Calu3 (cell line): ENCODE measurements at regions of chr7 and their contacts with region 1.

Region 1: DNA sequence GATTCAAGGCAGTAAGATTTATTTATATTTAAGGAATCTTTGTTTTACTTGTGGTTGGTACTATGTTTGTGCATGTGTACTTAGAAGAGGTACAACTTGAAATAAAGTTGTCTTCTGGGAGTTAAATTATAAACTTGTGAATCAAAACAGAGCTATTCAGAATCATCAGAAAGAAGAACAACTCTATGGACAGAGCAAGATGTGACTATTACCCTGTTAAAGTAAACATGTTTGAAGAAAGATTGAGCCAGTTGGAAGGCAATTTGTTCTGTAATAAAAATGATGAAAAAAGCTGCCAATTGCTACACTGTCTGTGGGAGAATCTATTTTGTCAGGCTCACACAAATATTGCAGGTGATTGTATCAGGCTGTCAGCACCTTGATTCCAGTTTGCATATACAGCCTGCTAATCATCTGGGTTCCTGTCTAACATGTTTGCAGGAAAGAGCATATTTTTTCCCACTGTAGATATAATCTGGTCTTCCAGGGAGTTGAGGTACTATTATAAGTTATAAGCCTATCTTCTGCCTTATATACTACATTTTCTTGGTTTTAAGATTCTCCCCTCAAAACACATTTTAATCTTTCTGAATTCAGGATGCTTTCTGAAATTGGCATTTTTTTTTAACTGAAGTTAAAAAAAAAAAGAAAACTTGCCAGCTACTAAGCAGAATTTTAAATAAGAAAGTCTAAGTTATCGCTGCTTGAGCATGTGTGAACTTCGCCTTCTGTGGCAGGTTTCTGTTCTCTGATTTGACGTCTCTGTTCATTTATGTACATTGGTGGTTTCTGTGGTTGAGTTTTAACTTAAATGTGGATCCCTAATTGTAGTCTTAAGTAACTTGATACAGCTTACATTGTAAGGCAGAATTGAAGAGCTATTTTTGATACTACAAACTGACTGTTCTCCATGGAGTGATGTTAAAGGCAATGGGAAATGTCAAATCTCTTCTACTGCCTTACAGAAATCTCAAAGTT is 46.0 kb downstream of the ZNRF2 start:
- DNase-seq: no peak
- H3K4me3 Mint-ChIP-seq: peak overlapping the region; percentile 4
- H3K27ac Mint-ChIP-seq: no peak overlapping the region
- H3K4me1 Mint-ChIP-seq: peaks cover 39% of the 10 kb centered on the region
- H3K27me3 Mint-ChIP-seq: no peaks in the 10 kb centered on the region
- CTCF ChIP-seq: no peak

Region 2: GRCh38 chr7:30212701-30213111 is 117.7 kb before region 1 on chr7:
- CTCF ChIA-PET with region 1: no interaction called
- intact Hi-C with region 1: no loop called
- DNase-seq: no peak
- H3K4me3 Mint-ChIP-seq: no peak overlapping the region
- H3K27ac Mint-ChIP-seq: no peak overlapping the region
- H3K4me1 Mint-ChIP-seq: no peaks in the 10 kb centered on the region
- H3K27me3 Mint-ChIP-seq: no peaks in the 10 kb centered on the region
- CTCF ChIP-seq: no peak

Region 3: DNA sequence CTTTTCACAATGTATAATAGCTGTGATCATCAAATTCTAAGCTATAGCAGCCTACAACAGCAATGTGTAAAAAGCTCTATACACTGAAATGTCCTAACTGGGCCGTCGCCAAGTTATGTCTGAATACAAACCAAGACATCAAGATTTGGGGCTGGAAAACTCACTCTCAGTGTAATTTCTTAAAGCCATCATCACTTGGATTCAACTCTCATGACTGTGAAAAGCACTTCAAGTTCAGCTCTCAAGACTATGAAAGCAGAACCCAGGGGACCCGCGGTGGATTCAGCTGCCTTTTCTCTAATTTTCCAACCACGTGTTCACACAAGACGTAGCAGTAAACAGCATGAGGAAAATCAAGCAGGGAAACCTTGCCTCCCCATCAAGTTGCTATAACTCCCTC is 61.8 kb before region 1 on chr7:
- CTCF ChIA-PET with region 1: no interaction called
- intact Hi-C with region 1: no loop called
- DNase-seq: no peak
- H3K4me3 Mint-ChIP-seq: no peak overlapping the region
- H3K27ac Mint-ChIP-seq: no peak overlapping the region
- H3K4me1 Mint-ChIP-seq: peaks cover 2% of the 10 kb centered on the region
- H3K27me3 Mint-ChIP-seq: no peaks in the 10 kb centered on the region
- CTCF ChIP-seq: no peak

Region 4: DNA sequence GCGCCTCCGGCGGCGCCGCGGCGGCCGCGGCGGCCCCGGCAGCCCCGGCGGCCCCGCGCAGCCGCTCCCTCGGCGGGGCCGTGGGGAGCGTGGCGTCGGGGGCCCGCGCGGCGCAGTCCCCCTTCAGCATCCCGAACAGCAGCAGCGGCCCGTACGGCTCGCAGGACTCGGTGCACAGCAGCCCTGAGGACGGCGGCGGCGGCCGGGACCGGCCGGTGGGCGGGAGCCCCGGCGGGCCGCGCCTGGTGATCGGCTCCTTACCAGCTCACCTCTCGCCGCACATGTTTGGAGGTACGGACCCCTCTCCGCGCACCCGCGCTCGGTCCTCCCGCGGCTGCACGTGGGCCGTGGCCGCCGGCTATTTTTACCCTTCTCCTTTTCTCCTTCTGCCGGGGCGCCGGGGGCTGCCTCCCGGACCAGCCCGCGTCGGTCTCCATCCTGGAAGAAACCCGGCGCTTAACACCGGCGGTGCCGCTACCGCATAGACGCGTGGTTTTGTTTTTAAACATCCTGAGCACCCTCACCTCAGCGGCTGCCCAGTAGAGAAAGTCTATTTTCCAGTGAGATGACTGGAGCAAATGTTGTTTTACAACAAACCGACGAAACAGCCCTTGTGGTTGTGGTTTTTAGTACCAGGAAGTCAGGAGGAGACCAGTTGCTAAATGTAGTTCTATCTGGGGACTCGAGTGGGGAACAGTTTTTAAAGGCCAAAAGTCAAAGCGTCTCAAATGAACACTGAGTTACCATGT is 44.7 kb before region 1 on chr7:
- CTCF ChIA-PET with region 1: no interaction called
- intact Hi-C with region 1: loop called (anchors 5 kb)
- DNase-seq: peak; percentile 46
- H3K4me3 Mint-ChIP-seq: peak overlapping the region; percentile 86
- H3K27ac Mint-ChIP-seq: peak overlapping the region; percentile 82
- H3K4me1 Mint-ChIP-seq: peaks cover 37% of the 10 kb centered on the region
- H3K27me3 Mint-ChIP-seq: no peaks in the 10 kb centered on the region
- CTCF ChIP-seq: no peak

Region 5: DNA sequence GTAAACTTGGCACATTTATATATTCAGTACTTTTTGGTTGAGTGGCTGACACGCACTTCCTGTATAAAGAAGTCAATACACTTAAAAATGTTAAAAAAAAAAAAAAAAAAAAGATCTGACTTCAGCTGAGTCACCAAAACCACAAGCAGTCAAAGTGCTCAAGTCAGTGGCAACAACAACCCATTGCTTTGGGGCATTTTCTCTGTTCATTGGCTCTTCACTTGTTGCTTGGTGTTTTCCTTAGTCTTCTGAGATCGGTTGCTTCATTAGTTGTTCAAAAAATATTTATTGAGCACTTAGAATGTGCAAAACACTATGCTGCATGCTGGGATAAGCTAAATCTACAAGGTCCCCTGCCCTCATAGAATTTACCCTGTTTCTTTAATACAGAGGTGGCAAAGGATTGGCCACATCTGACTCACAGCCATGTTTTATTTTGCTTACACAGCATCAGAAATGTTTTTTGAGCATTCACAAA is 17.7 kb after region 1 on chr7:
- CTCF ChIA-PET with region 1: interaction called, 5 read pairs
- intact Hi-C with region 1: loop called (anchors 2 kb)
- DNase-seq: peak; percentile 50
- H3K4me3 Mint-ChIP-seq: no peak overlapping the region
- H3K27ac Mint-ChIP-seq: peak overlapping the region; percentile 44
- H3K4me1 Mint-ChIP-seq: peaks cover 20% of the 10 kb centered on the region
- H3K27me3 Mint-ChIP-seq: no peaks in the 10 kb centered on the region
- CTCF ChIP-seq: no peak